B cell (primary cell): ENCODE measurements at regions of chr11 and their contacts with region 1.

Region 1: DNA sequence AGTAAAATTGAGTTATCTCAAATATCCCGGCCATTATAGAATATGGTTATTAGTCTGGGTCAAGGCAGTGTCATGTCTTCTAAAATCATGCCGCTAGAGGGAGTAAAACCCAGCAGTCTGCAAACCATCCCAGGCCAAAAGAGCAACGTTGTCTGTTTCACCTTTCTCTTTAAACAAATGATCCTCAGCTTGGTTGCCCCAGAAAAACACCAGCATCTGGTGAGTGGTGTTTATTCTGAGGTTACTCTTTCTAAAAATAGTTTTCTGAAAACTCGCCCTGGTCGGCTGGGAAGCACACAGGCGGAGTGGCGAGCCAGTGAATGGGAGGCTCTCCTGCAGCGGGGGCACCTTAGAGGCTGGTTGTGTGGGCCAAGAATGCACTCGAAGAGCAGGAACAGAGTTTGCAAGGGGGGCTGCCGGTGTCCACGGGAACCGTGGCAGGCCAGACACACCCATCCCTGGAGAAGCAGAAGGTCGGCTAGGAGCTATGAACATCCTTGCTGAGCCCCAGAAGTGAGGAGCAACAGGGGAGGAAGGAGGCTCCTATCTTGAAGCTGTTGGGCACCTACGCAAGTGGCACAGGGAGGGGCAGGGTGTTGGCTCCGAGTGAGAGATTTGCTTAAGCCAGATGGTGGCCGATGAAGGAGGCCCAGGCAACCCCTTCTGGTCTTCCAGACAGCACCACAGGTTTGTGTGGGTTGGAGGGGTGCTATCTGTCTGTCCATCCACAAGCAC is 297.1 kb downstream of the ETS1 start:
- DNase-seq: peak; percentile 91
- ATAC-seq: peak; percentile 71
- H3K4me3 ChIP-seq: peak overlapping the region in 4 of 5 experiments; percentile 33 to 48 (median 48)
- H3K4me3 Mint-ChIP-seq: peak overlapping the region; percentile 78
- H3K27ac ChIP-seq: peak overlapping the region; percentile 94 to 95
- H3K27ac Mint-ChIP-seq: peak overlapping the region; percentile 99
- H3K4me1 ChIP-seq: peaks cover 73 to 74% of the 10 kb centered on the region in 2 donors
- H3K4me1 Mint-ChIP-seq: peaks cover 95% of the 10 kb centered on the region
- H3K27me3 ChIP-seq: no peaks in the 10 kb centered on the region
- H3K27me3 Mint-ChIP-seq: no peaks in the 10 kb centered on the region
- CTCF ChIP-seq: peak; percentile 90

Region 2: GRCh38 chr11:127859941-127860354 is 430.3 kb before region 1 on chr11:
- CTCF ChIA-PET with region 1: no interaction called
- POLR2A ChIA-PET with region 1: no interaction called
- intact Hi-C with region 1: no loop called
- DNase-seq: no peak
- ATAC-seq: no peak
- H3K4me3 ChIP-seq: no peak overlapping the region
- H3K4me3 Mint-ChIP-seq: no peak overlapping the region
- H3K27ac ChIP-seq: no peak overlapping the region
- H3K27ac Mint-ChIP-seq: no peak overlapping the region
- H3K4me1 ChIP-seq: no peaks in the 10 kb centered on the region
- H3K4me1 Mint-ChIP-seq: no peaks in the 10 kb centered on the region
- H3K27me3 ChIP-seq: no peaks in the 10 kb centered on the region
- H3K27me3 Mint-ChIP-seq: peaks cover 5% of the 10 kb centered on the region
- CTCF ChIP-seq: no peak

Region 3: DNA sequence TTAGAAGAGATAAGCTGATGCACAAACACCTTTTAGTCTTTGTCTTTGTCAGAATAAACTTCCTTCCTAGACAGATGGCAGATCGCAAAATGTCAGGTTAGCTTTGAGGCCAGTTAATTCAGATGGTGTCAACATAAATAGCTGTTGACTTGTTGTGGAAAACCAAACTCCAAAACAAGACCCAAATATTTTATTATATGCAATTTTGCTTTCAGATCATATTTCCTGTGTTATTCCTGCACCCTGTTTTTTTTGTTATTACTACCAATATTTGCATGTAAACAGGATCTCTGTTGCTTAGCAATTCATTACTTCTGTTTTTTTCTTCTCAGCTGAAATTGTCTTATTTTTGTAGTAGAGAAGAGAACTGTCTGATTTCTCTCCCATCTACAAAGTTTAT is 18.9 kb before region 1 on chr11:
- CTCF ChIA-PET with region 1: interaction called, 5 read pairs
- POLR2A ChIA-PET with region 1: interaction called, 3 read pairs
- intact Hi-C with region 1: loop called (anchors 1 kb)
- DNase-seq: peak; percentile 76
- ATAC-seq: peak; percentile 57
- H3K4me3 ChIP-seq: peak overlapping the region in 1 of 5 experiments; percentile 32
- H3K4me3 Mint-ChIP-seq: peak overlapping the region; percentile 75
- H3K27ac ChIP-seq: peak overlapping the region; percentile 86 to 95
- H3K27ac Mint-ChIP-seq: peak overlapping the region; percentile 96
- H3K4me1 ChIP-seq: peaks cover 48 to 53% of the 10 kb centered on the region in 2 donors
- H3K4me1 Mint-ChIP-seq: peaks cover 53% of the 10 kb centered on the region
- H3K27me3 ChIP-seq: no peaks in the 10 kb centered on the region
- H3K27me3 Mint-ChIP-seq: no peaks in the 10 kb centered on the region
- CTCF ChIP-seq: no peak

Region 4: DNA sequence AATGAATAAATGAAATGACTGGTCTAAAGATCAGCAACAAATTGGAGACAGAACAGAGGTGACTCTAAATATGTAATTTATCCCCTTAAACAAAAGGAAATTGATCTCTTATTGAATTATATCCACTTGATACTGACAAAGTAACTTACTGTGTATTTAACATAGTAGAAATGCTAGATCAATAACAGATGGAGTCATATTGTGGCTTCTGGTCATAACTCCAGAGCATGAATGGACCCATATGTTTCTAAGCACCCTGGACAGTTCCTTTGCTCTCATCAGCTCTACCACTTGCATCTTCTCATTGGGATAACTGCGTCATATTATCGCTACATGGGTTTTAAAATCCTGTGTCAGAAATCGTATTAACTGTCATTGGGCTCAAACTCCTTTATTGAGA is 74.8 kb after region 1 on chr11:
- CTCF ChIA-PET with region 1: interaction called, 7 read pairs
- POLR2A ChIA-PET with region 1: no interaction called
- intact Hi-C with region 1: loop called (anchors 5 kb)
- DNase-seq: peak; percentile 33
- ATAC-seq: no peak
- H3K4me3 ChIP-seq: no peak overlapping the region
- H3K4me3 Mint-ChIP-seq: no peak overlapping the region
- H3K27ac ChIP-seq: no peak overlapping the region
- H3K27ac Mint-ChIP-seq: no peak overlapping the region
- H3K4me1 ChIP-seq: peaks cover 14 to 24% of the 10 kb centered on the region in 2 donors
- H3K4me1 Mint-ChIP-seq: peaks cover 23% of the 10 kb centered on the region
- H3K27me3 ChIP-seq: no peaks in the 10 kb centered on the region
- H3K27me3 Mint-ChIP-seq: no peaks in the 10 kb centered on the region
- CTCF ChIP-seq: no peak

Region 5: DNA sequence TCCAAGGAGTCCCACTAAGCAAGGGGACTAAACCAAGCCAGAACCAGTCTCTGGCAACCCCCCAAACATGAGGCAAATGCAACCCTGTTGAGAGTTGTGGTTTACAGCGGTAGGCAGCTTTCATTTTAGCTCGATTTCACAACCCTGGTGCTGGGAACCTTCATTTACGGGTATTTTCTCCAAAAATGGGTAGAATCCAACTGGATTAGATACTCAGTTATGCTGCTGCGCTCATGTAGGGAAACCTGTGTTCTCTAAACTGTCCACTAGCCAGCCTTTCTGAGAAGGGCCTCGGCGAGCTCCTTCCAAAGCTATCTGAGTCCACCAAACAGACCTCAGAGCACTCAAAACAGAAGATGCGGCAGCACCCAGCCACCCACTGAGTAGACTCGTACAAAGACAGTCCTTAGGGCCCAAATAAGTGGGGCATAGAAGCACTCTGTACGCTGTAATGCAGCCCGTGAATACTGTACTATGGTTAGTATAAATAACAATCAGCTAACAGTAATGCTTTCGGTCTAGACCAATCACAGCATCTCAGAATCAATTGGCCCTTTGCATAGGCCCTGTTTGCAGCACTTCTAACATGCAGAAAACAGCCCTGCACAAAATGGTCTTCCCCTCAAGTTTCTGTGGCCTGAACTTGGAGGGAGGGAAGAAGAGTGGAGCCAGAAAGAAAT is 192.4 kb after region 1 on chr11:
- CTCF ChIA-PET with region 1: interaction called, 40 read pairs
- POLR2A ChIA-PET with region 1: interaction called, 5 read pairs
- intact Hi-C with region 1: no loop called
- DNase-seq: no peak
- ATAC-seq: peak; percentile 13
- H3K4me3 ChIP-seq: peak overlapping the region in 2 of 5 experiments; percentile 27 to 37
- H3K4me3 Mint-ChIP-seq: peak overlapping the region; percentile 61
- H3K27ac ChIP-seq: peak overlapping the region; percentile 77 to 90
- H3K27ac Mint-ChIP-seq: peak overlapping the region; percentile 95
- H3K4me1 ChIP-seq: peaks cover 82% of the 10 kb centered on the region in 2 donors
- H3K4me1 Mint-ChIP-seq: peaks cover 92% of the 10 kb centered on the region
- H3K27me3 ChIP-seq: no peaks in the 10 kb centered on the region
- H3K27me3 Mint-ChIP-seq: no peaks in the 10 kb centered on the region
- CTCF ChIP-seq: no peak

Region 6: DNA sequence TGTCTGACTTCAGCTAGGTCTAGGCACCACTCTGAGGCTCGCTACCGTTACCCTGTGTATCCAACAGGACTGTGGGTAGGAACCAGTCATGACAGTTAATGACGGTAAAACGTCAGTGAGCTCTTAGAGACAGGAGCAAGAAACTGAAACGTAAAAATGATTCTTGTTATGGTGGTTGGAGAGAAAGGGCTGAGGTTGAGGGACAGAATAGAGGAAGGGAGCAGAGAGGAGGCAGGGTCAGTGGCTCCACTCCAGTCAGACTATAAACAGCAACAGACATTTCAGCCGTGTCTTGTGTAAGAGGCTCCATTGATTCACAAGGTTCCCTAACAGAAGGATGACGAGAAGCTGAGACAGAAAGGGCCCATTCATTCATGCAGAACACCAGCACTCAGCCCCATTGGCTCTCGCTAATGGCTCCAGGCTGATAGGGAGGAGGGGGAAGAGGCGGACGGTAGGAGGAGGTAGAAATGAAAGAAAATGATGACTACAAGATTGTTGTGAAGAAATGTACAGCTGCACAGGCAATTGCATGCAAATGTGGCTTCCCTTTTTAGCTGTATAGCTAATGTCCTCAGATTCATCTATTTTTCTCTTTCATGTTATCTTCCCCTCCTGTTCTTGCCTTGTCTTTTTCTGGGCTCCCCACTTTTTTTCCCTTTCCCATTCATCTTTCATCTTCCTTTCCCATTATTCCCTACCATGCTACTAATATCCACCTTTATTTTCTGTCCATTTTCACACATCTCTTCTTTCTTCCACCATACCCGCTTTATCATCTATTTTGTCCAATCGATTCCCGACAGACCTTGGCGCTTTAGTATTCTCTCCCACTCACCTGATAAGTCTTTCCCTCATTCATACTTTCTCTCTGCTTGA is 262.7 kb after region 1 on chr11:
- CTCF ChIA-PET with region 1: interaction called, 27 read pairs
- POLR2A ChIA-PET with region 1: interaction called, 13 read pairs
- intact Hi-C with region 1: loop called (anchors 1 kb)
- DNase-seq: peak; percentile 93
- ATAC-seq: peak; percentile 80
- H3K4me3 ChIP-seq: peak overlapping the region; percentile 4 to 58 (median 27)
- H3K4me3 Mint-ChIP-seq: peak overlapping the region; percentile 85
- H3K27ac ChIP-seq: peak overlapping the region; percentile 92 to 93
- H3K27ac Mint-ChIP-seq: peak overlapping the region; percentile 99
- H3K4me1 ChIP-seq: peaks cover 62 to 71% of the 10 kb centered on the region in 2 donors
- H3K4me1 Mint-ChIP-seq: peaks cover 70% of the 10 kb centered on the region
- H3K27me3 ChIP-seq: no peaks in the 10 kb centered on the region
- H3K27me3 Mint-ChIP-seq: no peaks in the 10 kb centered on the region
- CTCF ChIP-seq: peak; percentile 10

Region 7: DNA sequence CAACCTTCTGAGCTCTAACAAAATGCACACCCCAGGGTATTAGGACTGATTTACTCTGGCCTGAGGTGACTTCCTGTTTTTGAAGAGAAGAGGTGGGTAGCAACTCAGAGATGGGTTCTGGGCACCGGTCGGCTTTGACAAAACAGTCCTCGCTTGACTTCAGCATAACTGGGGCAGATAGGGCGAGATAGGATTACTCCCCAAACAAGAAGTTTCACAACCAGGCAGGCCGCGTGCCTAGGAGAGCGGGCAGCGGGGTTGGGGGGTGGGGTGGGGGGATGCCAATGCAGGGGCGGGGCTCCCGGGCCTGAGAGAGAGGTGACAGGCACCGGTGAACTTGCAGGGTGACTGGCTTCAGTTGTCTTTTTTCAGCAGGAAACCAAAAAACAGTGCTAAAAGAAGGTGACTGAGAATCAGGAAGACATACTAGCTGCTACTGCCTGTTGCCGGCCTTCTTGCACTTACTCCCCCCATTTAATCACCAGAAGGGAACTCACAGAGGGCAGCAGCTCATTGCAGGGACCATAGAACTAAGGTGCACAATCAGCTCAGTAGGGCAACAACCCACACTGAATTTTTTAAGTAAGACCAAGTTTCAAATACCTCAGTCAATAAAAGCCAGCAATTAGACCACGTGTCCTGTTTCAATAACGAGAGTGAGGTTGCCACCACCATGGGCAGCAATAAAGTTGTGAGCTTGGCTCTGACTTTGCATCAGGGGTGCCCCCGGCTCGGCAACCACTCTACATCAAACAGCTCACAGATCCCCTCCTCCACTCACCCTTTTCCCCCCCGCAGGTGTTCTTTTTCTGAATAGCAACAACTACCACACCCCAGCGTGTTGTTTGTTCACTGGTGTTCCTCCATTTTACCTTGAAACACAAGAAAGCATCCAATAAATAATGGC is 334.2 kb after region 1 on chr11:
- CTCF ChIA-PET with region 1: interaction called, 251 read pairs
- POLR2A ChIA-PET with region 1: interaction called, 7 read pairs
- intact Hi-C with region 1: loop called (anchors 1 kb)
- DNase-seq: peak; percentile 92
- ATAC-seq: peak; percentile 85
- H3K4me3 ChIP-seq: peak overlapping the region in 2 of 5 experiments; percentile 3 to 43
- H3K4me3 Mint-ChIP-seq: peak overlapping the region; percentile 77
- H3K27ac ChIP-seq: peak overlapping the region; percentile 90 to 93
- H3K27ac Mint-ChIP-seq: peak overlapping the region; percentile 99
- H3K4me1 ChIP-seq: peaks cover 98% of the 10 kb centered on the region in 2 donors
- H3K4me1 Mint-ChIP-seq: peaks cover 96% of the 10 kb centered on the region
- H3K27me3 ChIP-seq: no peaks in the 10 kb centered on the region
- H3K27me3 Mint-ChIP-seq: no peaks in the 10 kb centered on the region
- CTCF ChIP-seq: no peak